Sigmoid colon (tissue), 7 donors: ENCODE measurements at regions of chr4 and their contacts with region 1.

Region 1: DNA sequence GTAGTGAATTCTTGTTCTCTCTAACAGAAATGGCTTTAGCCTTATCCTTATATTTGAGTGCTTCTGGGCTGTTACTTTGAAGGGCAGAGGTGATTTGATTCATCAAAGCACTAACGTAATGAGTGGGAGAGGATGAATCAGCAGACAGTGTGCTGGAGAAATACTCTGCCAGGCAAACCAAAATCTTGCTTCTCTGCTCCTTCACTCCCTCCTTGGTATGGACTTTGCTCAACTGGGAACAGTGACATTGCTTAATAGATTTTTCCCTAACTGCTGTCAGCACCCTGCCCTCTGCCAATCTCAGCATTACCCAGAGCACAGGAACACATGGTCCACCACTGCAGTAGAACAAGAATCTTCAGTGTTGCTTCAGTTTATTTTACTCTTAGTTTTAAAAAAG is 56.0 kb downstream of the PDLIM5 start:
- DNase-seq: no peak
- H3K4me3 ChIP-seq: no peak overlapping the region
- H3K27ac ChIP-seq: peak overlapping the region; percentile 13 to 70 (median 59)
- H3K4me1 ChIP-seq: peaks cover 0 to 72% (median 66%) of the 10 kb centered on the region in 4 donors
- H3K27me3 ChIP-seq: no peaks in the 10 kb centered on the region
- CTCF ChIP-seq: no peak
- EP300 ChIP-seq: no peak
- POLR2A ChIP-seq: no peak

Region 2: DNA sequence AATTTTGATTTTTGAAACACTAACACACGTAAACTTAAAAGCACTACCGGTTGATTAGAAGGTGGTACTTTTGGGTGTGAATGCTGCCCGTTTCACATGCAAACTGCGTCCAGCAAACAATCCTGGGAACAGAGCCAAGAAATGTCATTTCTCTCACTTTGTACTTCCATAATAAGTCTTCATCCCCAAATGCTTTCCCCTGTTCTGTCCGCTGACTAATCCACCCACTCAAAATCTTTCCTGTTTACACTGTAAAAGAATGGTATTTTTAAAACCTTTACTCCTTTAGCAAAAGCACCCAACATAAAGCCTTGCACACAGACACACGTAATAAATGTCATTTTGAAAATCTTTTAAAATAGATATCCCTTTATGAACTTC is 95.1 kb before region 1 on chr4:
- intact Hi-C with region 1: loop called (anchors 10 kb)
- DNase-seq: no peak
- H3K4me3 ChIP-seq: peak overlapping the region in 2 of 4 donors; percentile 9 to 17
- H3K27ac ChIP-seq: peak overlapping the region; percentile 56 to 81 (median 70)
- H3K4me1 ChIP-seq: peaks cover 0 to 51% (median 36%) of the 10 kb centered on the region in 4 donors
- H3K27me3 ChIP-seq: no peaks in the 10 kb centered on the region
- CTCF ChIP-seq: no peak
- EP300 ChIP-seq: no peak
- POLR2A ChIP-seq: no peak